ENCODE measurements at regions of chr18 and their contacts with region 1.

Region 1: DNA sequence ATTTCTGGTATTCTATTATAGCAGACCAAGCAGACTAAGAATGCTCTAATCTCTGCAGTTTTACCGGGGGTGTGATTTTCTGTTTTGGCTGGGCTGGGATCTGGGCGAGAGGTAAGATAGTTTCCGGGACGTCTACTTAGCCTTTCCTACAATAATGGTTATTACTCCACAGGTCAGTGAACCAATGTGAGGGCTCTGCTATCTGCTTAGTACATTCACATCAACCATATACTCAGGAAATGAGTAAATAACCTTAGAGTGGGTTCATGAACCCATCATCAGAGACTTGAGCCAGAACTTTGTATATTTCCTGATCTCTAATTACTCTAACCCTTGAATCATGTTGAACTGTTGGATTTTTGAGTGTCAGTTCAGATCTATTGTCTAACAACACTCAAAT is 90.1 kb upstream of the NOL4 start:
- DNase-seq: no peak
- ATAC-seq: no peak
- H3K4me3 ChIP-seq: no peak overlapping the region
- H3K27ac ChIP-seq: no peak overlapping the region
- H3K4me1 ChIP-seq: no peaks in the 10 kb centered on the region
- H3K27me3 ChIP-seq: peaks cover 0 to 12% (median 0%) of the 10 kb centered on the region in 7 donors
- CTCF ChIP-seq: no peak

Region 2: DNA sequence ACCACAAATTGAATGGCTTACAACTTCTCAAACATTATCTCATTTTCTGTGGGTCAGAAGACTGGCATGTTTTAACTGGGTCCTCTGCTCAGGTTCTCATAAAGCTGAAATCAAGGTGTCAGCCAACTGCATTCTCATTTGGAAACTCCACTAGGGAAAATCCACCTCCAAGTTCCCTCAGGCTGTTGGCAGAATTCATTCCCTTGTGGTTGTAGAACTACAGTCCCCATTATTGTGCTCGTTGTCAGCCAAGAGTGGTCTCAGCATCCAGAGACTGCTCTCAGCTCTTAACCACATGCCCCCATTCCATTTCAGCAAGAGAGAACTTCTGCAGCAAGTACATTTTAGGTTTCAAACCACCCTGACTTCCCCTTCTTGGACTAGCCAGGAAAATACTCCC is 102.3 kb before region 1 on chr18:
- intact Hi-C with region 1: no loop called
- DNase-seq: no peak
- ATAC-seq: no peak
- H3K4me3 ChIP-seq: no peak overlapping the region
- H3K27ac ChIP-seq: no peak overlapping the region
- H3K4me1 ChIP-seq: no peaks in the 10 kb centered on the region
- H3K27me3 ChIP-seq: peaks cover 0 to 5% (median 0%) of the 10 kb centered on the region in 7 donors
- CTCF ChIP-seq: no peak

Region 3: DNA sequence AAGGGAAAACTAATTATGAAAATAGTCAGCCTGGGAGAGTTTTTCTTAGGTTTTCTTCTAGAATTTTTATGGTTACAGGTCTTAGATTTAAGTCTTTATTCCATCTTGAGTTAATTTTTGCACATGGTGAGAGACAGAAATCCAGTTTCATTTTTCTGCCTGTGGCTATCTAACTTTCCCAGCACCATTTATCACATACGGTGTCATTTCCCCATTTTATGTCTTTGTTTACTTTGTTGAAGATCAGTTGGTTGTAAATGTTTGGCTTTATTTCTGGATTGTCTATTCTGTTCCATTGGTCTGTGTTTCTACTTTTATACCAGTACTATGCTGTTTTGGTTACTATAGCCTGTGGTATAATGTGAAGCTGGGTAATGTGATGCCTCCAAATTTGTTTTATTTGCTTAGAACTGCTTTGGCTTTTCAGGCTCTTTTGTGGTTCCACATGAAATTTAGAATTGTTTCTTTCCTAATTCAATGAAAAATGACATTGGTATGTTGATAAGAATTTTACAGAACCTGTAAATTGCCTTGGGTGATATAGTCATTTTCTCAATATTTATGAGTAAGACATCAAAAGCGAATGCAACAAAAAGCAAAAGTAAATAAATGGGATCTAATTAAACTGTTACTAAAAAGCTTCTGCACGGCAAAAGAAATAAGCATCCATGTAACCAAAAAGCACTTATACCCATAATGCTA is 56.0 kb after region 1 on chr18:
- intact Hi-C with region 1: loop called in 1 of 10 experiments (anchors 10 kb)
- DNase-seq: no peak
- ATAC-seq: no peak
- H3K4me3 ChIP-seq: no peak overlapping the region
- H3K27ac ChIP-seq: no peak overlapping the region
- H3K4me1 ChIP-seq: no peaks in the 10 kb centered on the region
- H3K27me3 ChIP-seq: no peaks in the 10 kb centered on the region
- CTCF ChIP-seq: no peak

Region 4: DNA sequence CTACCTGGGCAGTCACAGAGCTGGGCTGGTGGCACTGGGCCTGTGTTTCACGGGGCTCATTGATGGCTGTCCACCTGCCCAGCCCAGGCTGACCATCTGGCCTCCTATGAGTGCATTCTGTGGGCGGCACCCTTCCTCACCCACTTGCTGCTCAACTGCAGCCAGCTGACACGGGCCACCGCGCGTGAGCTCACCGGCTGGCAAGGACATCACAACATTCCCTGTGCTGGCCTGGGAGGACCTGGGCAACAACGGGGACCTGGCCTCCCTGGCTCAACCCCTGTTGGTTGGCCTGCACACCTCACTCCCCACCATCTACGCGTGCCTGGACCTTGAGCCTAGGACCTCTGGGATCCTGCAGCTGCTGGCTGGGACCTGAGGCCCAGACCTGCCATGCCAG is 297.1 kb after region 1 on chr18:
- intact Hi-C with region 1: no loop called
- DNase-seq: peak in 1 of 2 donors; percentile 34
- ATAC-seq: peak; percentile 20 to 87 (median 76)
- H3K4me3 ChIP-seq: no peak overlapping the region
- H3K27ac ChIP-seq: peak overlapping the region in 4 of 10 donors; percentile 1 to 44 (median 24)
- H3K4me1 ChIP-seq: peaks cover 3 to 51% (median 15%) of the 10 kb centered on the region in 9 donors
- H3K27me3 ChIP-seq: no peaks in the 10 kb centered on the region
- CTCF ChIP-seq: no peak